ENCODE measurements at regions of chr12 and their contacts with region 1.

Region 1: GRCh38 chr12:26748741-26749431 is 84.1 kb downstream of the ITPR2 start:
- DNase-seq: no peak
- H3K4me3 Mint-ChIP-seq: peak overlapping the region; percentile 12
- H3K27ac Mint-ChIP-seq: peak overlapping the region; percentile 88
- H3K4me1 Mint-ChIP-seq: peaks cover 64% of the 10 kb centered on the region
- H3K27me3 Mint-ChIP-seq: no peaks in the 10 kb centered on the region

Region 2: DNA sequence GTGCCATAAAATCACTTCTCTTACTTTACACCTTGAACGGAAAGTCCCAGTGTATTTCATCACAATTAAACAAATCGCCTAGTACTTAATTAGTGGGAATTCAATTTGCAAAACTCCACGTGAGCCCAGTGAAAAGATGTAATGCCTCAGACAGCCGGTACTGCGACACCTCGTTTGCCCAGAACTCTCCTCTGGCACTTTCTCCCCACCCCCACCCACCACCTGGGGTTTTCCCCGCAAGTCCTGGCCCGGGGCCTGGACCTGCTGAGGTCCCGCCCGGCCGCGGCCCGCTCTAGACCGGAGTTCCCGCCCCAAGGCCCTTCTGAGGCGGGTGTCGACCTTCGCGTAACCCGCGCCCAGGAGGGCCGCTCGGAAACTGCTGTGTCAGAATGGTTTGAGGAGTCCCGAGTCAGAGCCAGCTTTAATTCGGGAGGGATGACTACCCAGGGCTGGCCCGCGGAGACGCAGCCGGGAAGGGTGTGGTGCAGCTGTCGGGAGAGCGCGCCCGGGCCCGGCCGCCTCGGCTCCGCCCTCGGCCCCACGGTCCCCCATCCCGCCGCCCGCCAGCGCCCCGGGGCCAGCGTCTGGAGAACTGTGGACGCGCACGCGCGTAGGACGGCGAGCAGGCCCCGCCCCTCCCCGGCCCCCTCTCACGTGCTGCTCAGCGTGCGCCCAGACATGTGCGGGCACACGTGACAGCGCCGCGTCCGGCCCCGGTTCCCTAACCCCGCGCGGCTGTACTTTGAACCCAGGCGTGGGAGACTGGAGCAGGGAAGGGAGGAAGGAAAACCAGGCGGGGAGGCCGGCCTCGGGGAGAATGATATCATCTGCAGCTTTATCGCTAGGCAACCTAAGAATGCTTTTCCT is 634.8 kb before region 1 on chr12:
- CTCF ChIA-PET with region 1: no interaction called
- intact Hi-C with region 1: loop called (anchors 2 kb)
- DNase-seq: peak; percentile 82
- H3K4me3 Mint-ChIP-seq: peak overlapping the region; percentile 68
- H3K27ac Mint-ChIP-seq: peak overlapping the region; percentile 22
- H3K4me1 Mint-ChIP-seq: peaks cover 6% of the 10 kb centered on the region
- H3K27me3 Mint-ChIP-seq: peaks cover 35% of the 10 kb centered on the region

Region 3: GRCh38 chr12:26791301-26791791 is 42.5 kb after region 1 on chr12:
- CTCF ChIA-PET with region 1: no interaction called
- intact Hi-C with region 1: loop called (anchors 1 kb)
- DNase-seq: no peak
- H3K4me3 Mint-ChIP-seq: no peak overlapping the region
- H3K27ac Mint-ChIP-seq: no peak overlapping the region
- H3K4me1 Mint-ChIP-seq: peaks cover 34% of the 10 kb centered on the region
- H3K27me3 Mint-ChIP-seq: no peaks in the 10 kb centered on the region

Region 4: DNA sequence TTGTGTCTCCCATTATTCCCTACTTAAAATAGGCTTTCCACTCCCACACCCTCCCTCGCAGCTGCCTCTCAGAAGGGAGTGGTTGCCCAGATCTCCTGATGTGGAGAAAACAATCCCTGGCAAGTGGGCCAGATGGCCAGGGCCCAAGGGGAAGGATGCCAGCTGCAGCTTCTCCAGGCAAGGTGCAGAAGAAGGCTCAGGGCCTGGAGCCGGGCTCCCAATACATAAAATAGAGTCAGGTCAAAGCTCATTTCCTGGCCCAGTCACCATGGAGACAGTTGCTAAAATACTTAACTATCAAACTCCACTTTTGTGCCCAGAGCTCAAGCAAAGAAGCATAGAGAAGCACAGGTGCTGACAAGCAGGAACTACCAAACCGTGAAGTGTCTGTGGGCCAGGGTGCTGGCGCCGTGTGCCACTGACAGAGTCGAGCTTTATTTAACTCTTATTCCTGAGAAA is 129.8 kb after region 1 on chr12:
- CTCF ChIA-PET with region 1: no interaction called
- intact Hi-C with region 1: no loop called
- DNase-seq: no peak
- H3K4me3 Mint-ChIP-seq: no peak overlapping the region
- H3K27ac Mint-ChIP-seq: no peak overlapping the region
- H3K4me1 Mint-ChIP-seq: no peaks in the 10 kb centered on the region
- H3K27me3 Mint-ChIP-seq: peaks cover 6% of the 10 kb centered on the region

Region 5: DNA sequence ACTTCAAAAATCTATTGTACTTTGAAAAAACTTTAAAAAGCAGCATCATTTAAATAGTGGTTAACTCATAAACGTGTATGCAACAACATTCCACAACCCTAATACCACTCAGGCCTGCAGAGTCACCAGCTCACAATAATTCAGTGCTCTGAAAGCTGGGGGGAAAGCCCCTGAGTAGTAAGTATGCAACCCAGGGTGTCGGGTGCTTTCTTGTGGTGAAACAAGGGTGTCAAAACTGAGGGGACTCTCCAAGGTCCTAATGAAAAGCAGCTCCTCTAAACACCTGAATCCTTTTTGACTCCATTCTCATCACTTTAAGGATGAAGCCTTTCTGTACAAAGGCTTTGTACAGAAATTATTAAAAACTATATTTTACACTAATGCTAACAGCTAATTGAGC is 223.1 kb after region 1 on chr12:
- CTCF ChIA-PET with region 1: no interaction called
- intact Hi-C with region 1: loop called (anchors 1 kb)
- DNase-seq: peak; percentile 92
- H3K4me3 Mint-ChIP-seq: no peak overlapping the region
- H3K27ac Mint-ChIP-seq: no peak overlapping the region
- H3K4me1 Mint-ChIP-seq: peaks cover 9% of the 10 kb centered on the region
- H3K27me3 Mint-ChIP-seq: no peaks in the 10 kb centered on the region

Region 6: GRCh38 chr12:27332407-27333301 is 583.8 kb after region 1 on chr12 and contains the start of gene BMAL2:
- CTCF ChIA-PET with region 1: no interaction called
- intact Hi-C with region 1: loop called (anchors 2 kb)
- DNase-seq: peak; percentile 44
- H3K4me3 Mint-ChIP-seq: peak within 1 kb of the TSS; percentile 90
- H3K27ac Mint-ChIP-seq: peak within 1 kb of the TSS; percentile 74
- H3K4me1 Mint-ChIP-seq: peaks cover 34% of the 10 kb centered on the region
- H3K27me3 Mint-ChIP-seq: peaks cover 30% of the 10 kb centered on the region
- total RNA-seq, gene BMAL2: 7.9 to 9.2 TPM